ENCODE measurements at regions of chr20 and their contacts with region 1.

Region 1: GRCh38 chr20:23570178-23570760 is 2.0 kb upstream of the CST9L start:
- DNase-seq: no peak
- ATAC-seq: no peak
- H3K4me3 ChIP-seq: no peak overlapping the region
- H3K27ac ChIP-seq: no peak overlapping the region
- H3K4me1 ChIP-seq: no peaks in the 10 kb centered on the region
- H3K27me3 ChIP-seq: peaks cover 3% of the 10 kb centered on the region
- CTCF ChIP-seq: no peak
- POLR2A ChIP-seq: no peak
- RAD21 ChIP-seq: no peak

Region 2: DNA sequence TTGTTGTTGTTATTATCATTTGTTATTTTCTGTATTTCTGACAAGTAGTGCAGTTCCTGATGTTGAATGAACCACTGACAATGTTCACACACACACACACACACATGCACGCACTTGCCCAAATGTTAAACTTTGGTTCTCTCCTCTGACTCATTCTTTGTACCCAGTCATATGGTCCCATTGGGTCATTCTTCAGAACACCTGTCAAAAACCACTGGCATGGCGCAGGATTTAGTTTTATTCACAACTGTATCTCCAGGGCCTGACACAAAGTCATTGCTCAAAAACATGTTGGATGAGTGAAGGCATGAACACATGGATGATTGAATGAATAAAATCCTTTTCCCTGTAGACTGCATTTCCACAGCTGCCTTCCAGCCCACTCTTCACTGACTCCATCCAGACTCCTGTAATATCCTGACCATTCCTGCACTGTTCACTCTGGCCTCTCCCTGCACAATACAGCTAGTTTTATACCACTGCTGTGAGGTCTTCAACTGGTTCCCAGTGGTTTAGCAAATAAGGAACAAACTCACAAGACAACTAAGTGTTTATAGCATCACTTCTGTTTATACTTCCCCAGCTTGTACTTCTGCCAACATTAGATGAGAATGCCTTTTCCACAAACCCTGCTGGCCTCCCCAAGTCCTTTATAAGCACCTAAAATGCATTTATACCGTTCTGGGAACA is 110.7 kb before region 1 on chr20:
- CTCF ChIA-PET with region 1: no interaction called
- POLR2A ChIA-PET with region 1: no interaction called
- dilution Hi-C with region 1: no loop called
- in situ Hi-C with region 1: no loop called
- intact Hi-C with region 1: loop called (anchors 10 kb)
- DNase-seq: no peak
- ATAC-seq: no peak
- H3K4me3 ChIP-seq: no peak overlapping the region
- H3K27ac ChIP-seq: no peak overlapping the region
- H3K4me1 ChIP-seq: no peaks in the 10 kb centered on the region
- H3K27me3 ChIP-seq: peaks cover 6% of the 10 kb centered on the region
- CTCF ChIP-seq: no peak
- POLR2A ChIP-seq: no peak
- RAD21 ChIP-seq: no peak

Measured in IMR-90 (cell line).